ENCODE measurements at regions of chr12 and their contacts with region 1.

Region 1: DNA sequence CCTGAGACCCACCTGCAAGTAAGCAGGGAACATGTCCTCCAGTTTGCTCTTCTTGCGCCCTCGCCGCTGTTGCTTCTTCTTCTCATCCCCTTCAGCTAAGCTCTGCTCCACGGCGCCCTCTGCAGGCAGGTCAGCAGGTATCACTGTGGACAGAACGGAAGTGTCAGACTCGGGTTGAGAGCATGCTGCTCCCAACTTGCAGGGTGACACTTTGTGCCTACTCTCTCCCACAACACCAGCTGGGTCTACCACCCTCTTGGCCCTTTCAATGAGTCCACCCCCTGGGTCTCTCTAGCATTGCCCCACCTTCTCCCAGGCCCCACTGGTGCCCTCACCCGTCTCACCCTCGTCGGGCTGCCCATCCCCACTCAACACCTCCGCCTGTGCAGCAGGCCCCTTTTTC is 16.7 kb downstream of the KMT2D start:
- DNase-seq: no peak
- ATAC-seq: peak; percentile 86
- H3K4me3 ChIP-seq: no peak overlapping the region
- H3K27ac ChIP-seq: no peak overlapping the region
- H3K4me1 ChIP-seq: no peaks in the 10 kb centered on the region
- H3K27me3 ChIP-seq: no peaks in the 10 kb centered on the region
- CTCF ChIP-seq: peak; percentile 25 to 93 (median 82); a peak in 5 of 6 replicates
- POLR2A ChIP-seq: no peak
- RAD21 ChIP-seq: no peak

Region 2: DNA sequence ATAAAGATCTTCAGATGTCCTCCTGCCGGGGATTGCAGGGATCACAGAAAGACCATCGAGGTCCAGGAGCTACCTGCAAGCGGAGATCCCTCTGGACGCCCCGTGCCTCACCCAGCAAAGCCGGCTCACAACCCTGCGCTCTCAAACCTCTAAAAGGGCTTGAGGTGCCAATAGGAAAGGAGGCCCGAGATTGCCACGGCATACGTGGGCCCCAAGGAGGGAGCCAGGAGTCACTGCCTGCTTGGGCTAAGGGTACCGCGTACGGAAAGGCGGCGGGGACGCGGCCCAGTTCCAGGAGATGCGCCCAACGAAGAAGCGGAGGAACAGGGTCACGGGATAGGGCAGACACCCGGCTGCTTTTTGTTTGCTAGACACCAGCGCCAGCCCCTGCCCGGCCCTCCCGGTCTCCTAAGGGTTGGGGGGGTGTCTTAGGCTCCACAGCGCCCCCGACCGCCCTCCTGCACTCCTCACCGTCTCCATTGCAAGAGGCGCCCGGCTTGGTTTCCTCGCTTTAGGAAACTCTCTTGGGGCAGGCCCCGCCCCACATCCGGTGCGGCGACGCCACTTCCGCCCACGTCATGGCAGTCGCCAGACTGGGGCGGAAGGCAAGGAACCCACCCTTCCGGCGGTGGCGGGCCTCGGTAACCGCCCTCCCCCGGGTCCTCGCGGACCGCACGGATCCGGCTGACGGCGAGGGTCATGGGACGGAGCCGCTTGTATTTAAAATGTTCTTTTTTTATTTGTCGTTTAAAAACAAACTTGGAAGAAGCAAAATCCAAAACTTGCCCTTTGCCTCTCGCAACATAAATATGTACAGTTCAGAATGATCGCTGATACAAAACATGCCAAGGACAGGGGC is 25.4 kb before region 1 on chr12 and contains the start of gene PRKAG1:
- CTCF ChIA-PET with region 1: interaction called, 16 read pairs
- POLR2A ChIA-PET with region 1: no interaction called
- RAD21 ChIA-PET with region 1: no interaction called
- intact Hi-C with region 1: no loop called
- DNase-seq: peak; percentile 93
- ATAC-seq: peak; percentile 85
- H3K4me3 ChIP-seq: peak within 1 kb of the TSS; percentile 88 to 93
- H3K27ac ChIP-seq: peak within 1 kb of the TSS; percentile 89
- H3K4me1 ChIP-seq: peaks cover 8 to 20% of the 10 kb centered on the region in 2 experiments
- H3K27me3 ChIP-seq: no peaks in the 10 kb centered on the region
- CTCF ChIP-seq: peak; percentile 35 to 45 (median 42); a peak in 5 of 6 replicates
- POLR2A ChIP-seq: peak; percentile 85
- RAD21 ChIP-seq: no peak
- total RNA-seq, gene PRKAG1: 64.6 TPM